Right cardiac atrium (tissue), 5 donors: ENCODE measurements at regions of chr1 and their contacts with region 1.

Region 1: DNA sequence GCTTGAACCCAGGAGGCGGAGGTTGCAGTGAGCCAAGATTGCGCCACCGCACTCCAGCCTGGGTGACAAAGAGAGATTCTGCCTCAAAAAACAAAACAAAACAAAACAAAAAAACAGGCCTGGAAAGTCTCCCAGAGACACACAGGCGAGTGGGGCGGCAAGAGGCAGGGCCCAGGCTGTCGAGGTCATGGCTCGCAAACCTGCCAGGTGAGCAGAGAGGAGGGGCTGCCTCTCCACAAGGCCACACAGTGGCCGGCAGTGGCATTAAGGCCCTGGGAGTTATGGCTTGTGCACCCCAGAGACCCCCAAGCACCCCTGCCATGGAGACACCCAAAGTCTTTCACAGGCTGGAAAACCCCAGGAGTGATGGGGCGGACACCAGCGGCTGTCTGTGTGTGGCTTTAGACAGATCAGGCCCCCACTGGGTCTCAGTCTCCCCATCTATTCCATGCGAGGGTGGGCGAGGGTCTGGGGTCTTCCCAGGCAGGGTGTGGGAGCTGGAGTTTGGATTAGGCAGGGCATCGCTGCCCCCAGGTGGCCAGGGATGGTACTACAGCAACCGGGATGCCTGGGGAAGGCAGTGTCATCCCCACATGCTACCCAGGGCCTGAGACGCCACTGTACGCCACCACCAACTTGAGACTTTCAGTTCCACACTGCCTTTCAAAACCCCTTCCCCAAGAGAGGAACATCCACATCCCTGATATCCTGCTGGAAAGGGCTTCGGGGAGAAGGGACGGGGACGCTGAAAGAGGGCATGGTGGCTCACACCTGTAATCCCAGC is 7.3 kb upstream of the CTRC start:
- DNase-seq: peak; percentile 64 to 87 (median 87)
- ATAC-seq: peak; percentile 59 to 76
- H3K4me3 ChIP-seq: no peak overlapping the region
- H3K27ac ChIP-seq: no peak overlapping the region
- H3K4me1 ChIP-seq: no peaks in the 10 kb centered on the region
- H3K27me3 ChIP-seq: no peaks in the 10 kb centered on the region

Region 2: DNA sequence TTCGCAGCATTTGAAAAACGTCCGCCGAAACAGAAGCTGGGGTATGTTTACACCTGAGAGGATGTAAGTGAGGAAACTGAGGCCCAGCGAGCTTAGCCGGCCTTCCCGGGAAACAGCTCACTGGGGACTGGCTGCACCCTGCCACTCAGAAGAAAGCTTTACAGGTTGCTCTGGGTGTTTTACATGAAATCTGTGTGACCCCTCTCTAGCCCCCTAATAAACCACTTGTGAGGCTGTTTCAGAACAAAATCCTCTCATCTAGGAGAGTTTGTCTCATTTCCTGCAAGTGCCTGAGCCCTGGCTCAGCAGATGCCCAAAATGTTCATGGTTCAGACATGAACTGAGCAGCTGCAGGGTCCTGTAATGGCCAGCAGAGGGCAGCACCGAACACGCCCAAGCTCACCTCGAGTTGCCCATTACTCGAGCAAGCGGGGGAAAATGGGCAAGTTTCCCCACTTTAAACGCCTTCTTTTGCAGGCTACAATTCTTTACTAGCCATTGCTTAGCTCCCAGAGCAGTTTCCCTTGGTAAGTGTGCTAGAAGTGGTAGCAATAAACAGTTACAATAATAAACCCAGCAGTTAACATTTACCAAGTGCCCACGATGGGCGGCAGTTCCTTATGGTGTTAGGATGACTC is 107.5 kb before region 1 on chr1:
- intact Hi-C with region 1: loop called (anchors 1 to 2 kb)
- DNase-seq: peak; percentile 70 to 89 (median 87)
- ATAC-seq: peak; percentile 76 to 87
- H3K4me3 ChIP-seq: no peak overlapping the region
- H3K27ac ChIP-seq: no peak overlapping the region
- H3K4me1 ChIP-seq: no peaks in the 10 kb centered on the region
- H3K27me3 ChIP-seq: no peaks in the 10 kb centered on the region

Region 3: DNA sequence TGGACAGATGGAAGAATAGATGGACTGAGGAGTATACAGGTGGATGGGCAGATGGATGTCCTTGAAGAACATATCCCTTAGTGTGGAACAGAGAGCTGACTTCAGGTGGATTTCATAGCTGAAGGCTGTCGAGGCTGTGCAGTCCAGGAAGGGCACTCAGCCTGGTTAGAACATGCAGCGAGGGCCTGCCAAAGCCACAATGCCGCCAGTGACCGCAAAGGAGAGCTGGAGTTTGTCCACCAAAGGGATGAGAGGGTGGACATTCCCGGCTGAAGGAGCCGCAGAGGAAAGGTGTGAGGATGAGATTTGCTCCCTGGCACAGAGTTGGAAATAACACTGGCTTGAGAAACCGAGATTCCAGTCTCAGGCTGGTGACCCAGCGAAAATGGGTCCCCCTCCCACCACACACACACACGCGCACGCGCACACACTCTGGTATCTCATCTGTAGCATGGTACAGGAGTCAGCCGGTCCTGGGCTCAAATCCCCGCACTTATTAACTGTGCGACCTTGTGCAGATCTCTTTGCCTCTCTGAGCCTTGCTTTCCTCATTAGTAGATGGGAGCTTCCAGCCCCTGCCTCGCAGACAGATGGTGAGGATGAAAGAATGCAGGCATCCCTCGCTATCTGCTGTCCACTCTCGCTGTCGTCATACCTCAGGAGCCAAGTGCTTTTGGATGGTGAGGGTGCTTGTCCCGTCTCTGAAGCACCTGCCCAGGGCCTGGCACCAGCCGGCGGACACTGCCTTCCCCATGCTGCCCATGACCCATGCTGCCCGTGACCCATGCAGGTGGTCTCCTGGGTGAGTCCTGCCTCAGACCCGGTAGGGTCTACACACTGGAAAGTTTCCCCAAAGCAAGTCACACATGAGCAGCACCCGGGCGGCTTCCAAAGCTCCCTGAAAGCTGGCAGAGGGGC is 48.1 kb before region 1 on chr1:
- intact Hi-C with region 1: no loop called
- DNase-seq: no peak
- ATAC-seq: peak in 1 of 2 donors; percentile 17
- H3K4me3 ChIP-seq: no peak overlapping the region
- H3K27ac ChIP-seq: no peak overlapping the region
- H3K4me1 ChIP-seq: no peaks in the 10 kb centered on the region
- H3K27me3 ChIP-seq: no peaks in the 10 kb centered on the region

Region 4: DNA sequence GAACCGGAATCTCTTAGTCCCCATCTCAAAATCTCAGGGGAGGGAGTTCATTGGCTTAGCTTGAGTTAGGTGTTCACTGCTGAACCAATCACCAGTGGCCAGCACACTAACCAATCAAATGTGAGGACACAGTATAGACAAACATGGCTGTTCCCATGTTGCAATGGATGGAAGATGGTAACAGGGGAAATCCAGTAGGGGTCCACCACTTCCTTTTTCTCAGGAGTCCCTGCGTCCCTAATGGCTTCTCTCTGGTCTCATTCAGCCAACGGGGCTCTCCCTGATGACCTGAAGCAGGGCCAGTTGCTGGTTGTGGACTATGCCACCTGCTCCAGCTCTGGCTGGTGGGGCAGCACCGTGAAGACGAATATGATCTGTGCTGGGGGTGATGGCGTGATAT is 54.7 kb after region 1 on chr1:
- intact Hi-C with region 1: no loop called
- DNase-seq: no peak
- ATAC-seq: no peak
- H3K4me3 ChIP-seq: no peak overlapping the region
- H3K27ac ChIP-seq: no peak overlapping the region
- H3K4me1 ChIP-seq: no peaks in the 10 kb centered on the region
- H3K27me3 ChIP-seq: no peaks in the 10 kb centered on the region

Region 5: DNA sequence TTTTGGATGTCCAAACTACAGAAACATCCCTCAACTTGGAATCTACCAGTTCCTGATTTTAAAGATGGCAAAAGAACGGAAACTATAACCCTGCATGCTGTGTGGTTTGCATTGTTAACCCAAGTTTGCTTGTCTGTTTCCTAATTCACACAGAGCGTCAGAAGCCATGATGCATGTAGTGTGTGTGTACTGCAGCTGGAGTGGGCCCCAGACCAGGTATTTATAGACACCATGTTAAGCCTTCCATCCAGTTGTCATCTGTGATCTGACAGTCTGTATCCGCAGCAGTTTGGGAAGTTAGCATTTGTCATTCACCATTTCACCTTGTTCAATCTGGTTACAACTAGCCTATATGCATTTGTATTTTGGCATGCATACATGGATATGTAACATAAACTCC is 225.5 kb after region 1 on chr1:
- intact Hi-C with region 1: no loop called
- DNase-seq: no peak
- ATAC-seq: peak; percentile 46 to 55
- H3K4me3 ChIP-seq: no peak overlapping the region
- H3K27ac ChIP-seq: no peak overlapping the region
- H3K4me1 ChIP-seq: no peaks in the 10 kb centered on the region
- H3K27me3 ChIP-seq: no peaks in the 10 kb centered on the region

Region 6: GRCh38 chr1:15923241-15923640 is 492.3 kb after region 1 on chr1:
- intact Hi-C with region 1: no loop called
- DNase-seq: no peak
- ATAC-seq: peak in 1 of 2 donors; percentile 34
- H3K4me3 ChIP-seq: no peak overlapping the region
- H3K27ac ChIP-seq: no peak overlapping the region
- H3K4me1 ChIP-seq: no peaks in the 10 kb centered on the region
- H3K27me3 ChIP-seq: no peaks in the 10 kb centered on the region